Activated CD8-positive, alpha-beta T cell treated with anti-CD3 and anti-CD28 coated beads for 36 hours (primary cell): ENCODE measurements at regions of chr4 and their contacts with region 1.

Region 1: GRCh38 chr4:88211473-88212252 is 53.2 kb upstream of the ABCG2 start:
- DNase-seq: peak; percentile 57
- ATAC-seq: no peak
- H3K4me3 Mint-ChIP-seq: no peak overlapping the region
- H3K27ac Mint-ChIP-seq: no peak overlapping the region
- H3K4me1 Mint-ChIP-seq: no peaks in the 10 kb centered on the region
- H3K27me3 Mint-ChIP-seq: no peaks in the 10 kb centered on the region
- CTCF ChIP-seq: peak; percentile 86

Region 2: GRCh38 chr4:87848622-87849351 is 362.9 kb before region 1 on chr4:
- CTCF ChIA-PET with region 1: interaction called, 19 read pairs
- POLR2A ChIA-PET with region 1: no interaction called
- intact Hi-C with region 1: loop called (anchors 5 kb)
- DNase-seq: peak; percentile 62
- ATAC-seq: peak; percentile 89
- H3K4me3 Mint-ChIP-seq: peak overlapping the region; percentile 32
- H3K27ac Mint-ChIP-seq: no peak overlapping the region
- H3K4me1 Mint-ChIP-seq: peaks cover 5% of the 10 kb centered on the region
- H3K27me3 Mint-ChIP-seq: peaks cover 19% of the 10 kb centered on the region
- CTCF ChIP-seq: peak; percentile 66

Region 3: DNA sequence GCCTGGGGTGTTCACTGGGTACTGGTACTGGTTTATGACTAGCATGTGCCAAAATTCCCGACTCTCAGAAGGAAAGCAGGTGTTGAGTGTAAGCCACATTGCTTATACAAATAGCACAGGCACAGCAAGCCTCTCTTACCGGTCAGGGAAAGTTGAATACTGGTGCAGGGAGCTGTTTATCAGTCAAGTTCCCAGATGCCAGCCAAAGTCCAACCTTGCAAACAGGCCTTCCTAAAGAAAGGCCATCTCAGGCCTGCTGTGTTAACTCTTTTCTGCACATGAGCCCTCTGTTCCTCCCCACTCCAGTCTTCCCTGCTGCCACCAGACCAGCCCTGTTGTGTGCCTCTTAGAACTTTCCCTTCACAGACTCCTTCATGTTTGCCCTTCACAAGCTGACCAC is 170.0 kb before region 1 on chr4:
- CTCF ChIA-PET with region 1: interaction called, 13 read pairs
- POLR2A ChIA-PET with region 1: no interaction called
- intact Hi-C with region 1: no loop called
- DNase-seq: no peak
- ATAC-seq: no peak
- H3K4me3 Mint-ChIP-seq: no peak overlapping the region
- H3K27ac Mint-ChIP-seq: no peak overlapping the region
- H3K4me1 Mint-ChIP-seq: no peaks in the 10 kb centered on the region
- H3K27me3 Mint-ChIP-seq: no peaks in the 10 kb centered on the region
- CTCF ChIP-seq: no peak

Region 4: DNA sequence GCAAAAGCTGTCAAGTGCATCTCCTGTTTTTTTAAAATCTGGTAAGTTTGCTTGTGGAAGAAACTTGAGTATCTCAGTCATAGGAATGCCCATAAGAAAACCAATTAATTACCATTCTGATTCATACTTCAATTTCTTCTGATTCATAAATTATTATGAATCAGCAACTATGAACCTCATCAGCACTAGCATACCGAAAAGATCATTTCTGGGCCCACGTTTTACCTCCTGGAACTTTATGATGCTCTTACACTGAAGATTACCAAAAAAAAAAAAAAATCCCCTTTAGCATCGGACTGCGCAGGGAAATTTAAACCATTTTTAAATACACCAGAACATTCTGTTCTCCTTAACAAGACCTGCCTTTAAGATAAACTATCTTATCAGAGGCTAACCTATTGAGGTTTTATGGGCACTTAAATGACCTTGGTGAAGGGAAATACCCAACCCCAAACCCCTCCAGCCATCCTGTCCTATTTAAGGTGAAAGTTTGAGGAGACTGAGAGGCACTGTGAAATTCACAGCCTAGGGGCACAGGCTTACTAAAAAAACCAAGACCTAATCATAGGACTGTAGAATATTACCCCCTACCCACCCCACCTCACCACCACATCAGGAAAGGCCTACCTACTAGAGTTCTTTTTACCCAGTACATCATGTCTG is 15.0 kb before region 1 on chr4:
- CTCF ChIA-PET with region 1: interaction called, 20 read pairs
- POLR2A ChIA-PET with region 1: no interaction called
- intact Hi-C with region 1: no loop called
- DNase-seq: no peak
- ATAC-seq: peak; percentile 39
- H3K4me3 Mint-ChIP-seq: no peak overlapping the region
- H3K27ac Mint-ChIP-seq: no peak overlapping the region
- H3K4me1 Mint-ChIP-seq: no peaks in the 10 kb centered on the region
- H3K27me3 Mint-ChIP-seq: no peaks in the 10 kb centered on the region
- CTCF ChIP-seq: no peak

Region 5: GRCh38 chr4:88341227-88342192 is 129.8 kb after region 1 on chr4:
- CTCF ChIA-PET with region 1: no interaction called
- POLR2A ChIA-PET with region 1: no interaction called
- intact Hi-C with region 1: no loop called
- DNase-seq: no peak
- ATAC-seq: no peak
- H3K4me3 Mint-ChIP-seq: no peak overlapping the region
- H3K27ac Mint-ChIP-seq: no peak overlapping the region
- H3K4me1 Mint-ChIP-seq: no peaks in the 10 kb centered on the region
- H3K27me3 Mint-ChIP-seq: no peaks in the 10 kb centered on the region
- CTCF ChIP-seq: no peak

Region 6: GRCh38 chr4:88446124-88446523 is 234.5 kb after region 1 on chr4:
- CTCF ChIA-PET with region 1: no interaction called
- POLR2A ChIA-PET with region 1: no interaction called
- intact Hi-C with region 1: no loop called
- DNase-seq: no peak
- ATAC-seq: no peak
- H3K4me3 Mint-ChIP-seq: no peak overlapping the region
- H3K27ac Mint-ChIP-seq: no peak overlapping the region
- H3K4me1 Mint-ChIP-seq: no peaks in the 10 kb centered on the region
- H3K27me3 Mint-ChIP-seq: no peaks in the 10 kb centered on the region
- CTCF ChIP-seq: no peak